ENCODE measurements at regions of chr14 and their contacts with region 1.

Region 1: DNA sequence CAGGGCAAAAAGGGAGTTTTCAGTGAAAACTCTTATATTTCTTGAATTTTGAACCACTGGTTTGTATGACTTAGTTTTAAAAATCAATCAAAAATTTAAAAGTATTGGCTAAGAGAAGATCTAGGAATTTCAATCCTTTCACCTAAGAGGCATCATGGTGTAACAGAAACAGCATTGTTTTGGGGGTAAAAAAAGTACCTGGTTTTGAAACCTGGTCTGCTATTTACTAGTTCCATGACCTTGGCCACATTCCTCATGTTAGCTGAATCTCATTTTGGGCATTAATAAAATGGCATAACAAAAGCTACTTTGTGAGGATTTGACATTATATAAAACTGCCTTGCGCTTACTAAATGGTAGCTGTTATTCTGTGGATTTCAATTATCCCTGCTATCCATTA is 16.7 kb upstream of the GNPNAT1 start:
- DNase-seq: no peak
- ATAC-seq: no peak
- H3K4me3 ChIP-seq: no peak overlapping the region
- H3K27ac ChIP-seq: no peak overlapping the region
- H3K4me1 ChIP-seq: no peaks in the 10 kb centered on the region; the same call in 2 of the 3 replicates
- CTCF ChIP-seq: no peak
- EP300 ChIP-seq: no peak
- POLR2A ChIP-seq: no peak
- RAD21 ChIP-seq: no peak

Region 2: GRCh38 chr14:52961060-52961639 is 153.0 kb after region 1 on chr14:
- CTCF ChIA-PET with region 1: interaction called, 16 read pairs
- POLR2A ChIA-PET with region 1: no interaction called
- DNase-seq: peak; percentile 73 to 80
- ATAC-seq: peak; percentile 81 to 96
- H3K4me3 ChIP-seq: no peak overlapping the region
- H3K27ac ChIP-seq: no peak overlapping the region; a peak in 1 of 6 replicates
- H3K4me1 ChIP-seq: no peaks in the 10 kb centered on the region
- CTCF ChIP-seq: peak; percentile 65
- EP300 ChIP-seq: no peak
- POLR2A ChIP-seq: no peak
- RAD21 ChIP-seq: peak; percentile 85 to 94

Measured in A549 (cell line).